CD4-positive, alpha-beta memory T cell (primary cell): ENCODE measurements at regions of chr17 and their contacts with region 1.

Region 1: GRCh38 chr17:16537130-16537458 is 31.9 kb downstream of the ZNF287 start:
- DNase-seq: no peak
- H3K4me3 ChIP-seq: peak overlapping the region in 1 of 2 donors; percentile 90
- H3K4me3 Mint-ChIP-seq: peak overlapping the region; percentile 95 to 99 (median 98)
- H3K27ac ChIP-seq: no peak overlapping the region
- H3K27ac Mint-ChIP-seq: peak overlapping the region; percentile 75 to 99 (median 90)
- H3K4me1 ChIP-seq: peaks cover 7% of the 10 kb centered on the region
- H3K4me1 Mint-ChIP-seq: peaks cover 10 to 24% (median 17%) of the 10 kb centered on the region in 4 donors
- H3K27me3 ChIP-seq: no peaks in the 10 kb centered on the region
- H3K27me3 Mint-ChIP-seq: peaks cover 0 to 1% of the 10 kb centered on the region in 2 donors

Region 2: DNA sequence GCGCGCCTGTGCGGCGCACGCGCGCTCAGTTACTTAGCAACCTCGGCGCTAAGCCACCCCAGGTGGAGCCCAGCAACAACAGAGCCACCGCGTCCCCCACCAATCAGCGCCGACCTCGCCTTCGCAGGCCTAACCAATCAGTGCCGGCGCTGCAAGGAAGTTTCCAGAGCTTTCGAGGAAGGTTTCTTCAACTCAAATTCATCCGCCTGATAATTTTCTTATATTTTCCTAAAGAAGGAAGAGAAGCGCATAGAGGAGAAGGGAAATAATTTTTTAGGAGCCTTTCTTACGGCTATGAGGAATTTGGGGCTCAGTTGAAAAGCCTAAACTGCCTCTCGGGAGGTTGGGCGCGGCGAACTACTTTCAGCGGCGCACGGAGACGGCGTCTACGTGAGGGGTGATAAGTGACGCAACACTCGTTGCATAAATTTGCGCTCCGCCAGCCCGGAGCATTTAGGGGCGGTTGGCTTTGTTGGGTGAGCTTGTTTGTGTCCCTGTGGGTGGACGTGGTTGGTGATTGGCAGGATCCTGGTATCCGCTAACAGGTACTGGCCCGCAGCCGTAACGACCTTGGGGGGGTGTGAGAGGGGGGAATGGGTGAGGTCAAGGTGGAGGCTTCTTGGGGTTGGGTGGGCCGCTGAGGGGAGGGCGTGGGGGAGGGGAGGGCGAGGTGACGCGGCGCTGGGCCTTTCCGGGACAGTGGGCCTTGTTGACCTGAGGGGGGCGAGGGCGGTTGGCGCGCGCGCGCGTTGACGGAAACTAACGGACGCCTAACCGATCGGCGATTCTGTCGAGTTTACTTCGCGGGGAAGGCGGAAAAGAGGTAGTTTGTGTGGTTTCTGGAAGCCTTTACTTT is 156.2 kb before region 1 on chr17 and contains the start of gene UBB:
- CTCF ChIA-PET with region 1: interaction called, 7 read pairs
- POLR2A ChIA-PET with region 1: interaction called, 28 read pairs
- intact Hi-C with region 1: loop called (anchors 5 kb)
- DNase-seq: peak; percentile 93 to 98 (median 97)
- H3K4me3 ChIP-seq: peak within 1 kb of the TSS; percentile 72 to 94
- H3K4me3 Mint-ChIP-seq: peak within 1 kb of the TSS; percentile 86 to 99 (median 94)
- H3K27ac ChIP-seq: peak within 1 kb of the TSS; percentile 91
- H3K27ac Mint-ChIP-seq: peak within 1 kb of the TSS; percentile 94 to 100 (median 99)
- H3K4me1 ChIP-seq: peaks cover 25% of the 10 kb centered on the region
- H3K4me1 Mint-ChIP-seq: peaks cover 28 to 49% (median 39%) of the 10 kb centered on the region in 4 donors
- H3K27me3 ChIP-seq: no peaks in the 10 kb centered on the region
- H3K27me3 Mint-ChIP-seq: peaks cover 0 to 4% of the 10 kb centered on the region in 2 donors
- total RNA-seq, gene UBB: 523 to 560 TPM

Region 3: GRCh38 chr17:16438557-16439302 is 98.4 kb before region 1 on chr17:
- CTCF ChIA-PET with region 1: interaction called, 5 read pairs
- POLR2A ChIA-PET with region 1: interaction called, 35 read pairs
- intact Hi-C with region 1: loop called (anchors 1 kb)
- DNase-seq: peak; percentile 94 to 97 (median 96)
- H3K4me3 ChIP-seq: peak overlapping the region; percentile 78 to 95
- H3K4me3 Mint-ChIP-seq: peak overlapping the region; percentile 98 to 100 (median 99)
- H3K27ac ChIP-seq: peak overlapping the region; percentile 94
- H3K27ac Mint-ChIP-seq: peak overlapping the region; percentile 96 to 100 (median 99)
- H3K4me1 ChIP-seq: peaks cover 45% of the 10 kb centered on the region
- H3K4me1 Mint-ChIP-seq: peaks cover 32 to 57% (median 43%) of the 10 kb centered on the region in 4 donors
- H3K27me3 ChIP-seq: no peaks in the 10 kb centered on the region
- H3K27me3 Mint-ChIP-seq: no peaks in the 10 kb centered on the region

Region 4: GRCh38 chr17:16506188-16506587 is 30.9 kb before region 1 on chr17:
- CTCF ChIA-PET with region 1: no interaction called
- POLR2A ChIA-PET with region 1: no interaction called
- intact Hi-C with region 1: no loop called
- DNase-seq: no peak
- H3K4me3 ChIP-seq: no peak overlapping the region
- H3K4me3 Mint-ChIP-seq: no peak overlapping the region
- H3K27ac ChIP-seq: no peak overlapping the region
- H3K27ac Mint-ChIP-seq: no peak overlapping the region
- H3K4me1 ChIP-seq: no peaks in the 10 kb centered on the region
- H3K4me1 Mint-ChIP-seq: no peaks in the 10 kb centered on the region
- H3K27me3 ChIP-seq: no peaks in the 10 kb centered on the region
- H3K27me3 Mint-ChIP-seq: no peaks in the 10 kb centered on the region

Region 5: GRCh38 chr17:16568541-16569357 is 31.7 kb after region 1 on chr17 and contains the start of gene ZNF287:
- CTCF ChIA-PET with region 1: interaction called, 7 read pairs
- POLR2A ChIA-PET with region 1: interaction called, 18 read pairs
- intact Hi-C with region 1: loop called (anchors 1 kb)
- DNase-seq: peak; percentile 91 to 96 (median 93)
- H3K4me3 ChIP-seq: peak within 1 kb of the TSS; percentile 33 to 87
- H3K4me3 Mint-ChIP-seq: peak within 1 kb of the TSS; percentile 85 to 89 (median 86)
- H3K27ac ChIP-seq: peak within 1 kb of the TSS; percentile 38
- H3K27ac Mint-ChIP-seq: peak within 1 kb of the TSS; percentile 79 to 98 (median 96)
- H3K4me1 ChIP-seq: peaks cover 14% of the 10 kb centered on the region
- H3K4me1 Mint-ChIP-seq: peaks cover 8 to 19% (median 12%) of the 10 kb centered on the region in 4 donors
- H3K27me3 ChIP-seq: no peaks in the 10 kb centered on the region
- H3K27me3 Mint-ChIP-seq: peaks cover 2 to 3% of the 10 kb centered on the region in 2 donors
- total RNA-seq, gene ZNF287: 16.7 to 17.9 TPM

Region 6: GRCh38 chr17:16653209-16654041 is 116.3 kb after region 1 on chr17 and contains the start of gene ZNF624:
- CTCF ChIA-PET with region 1: no interaction called
- POLR2A ChIA-PET with region 1: interaction called, 3 read pairs
- intact Hi-C with region 1: loop called (anchors 1 kb)
- DNase-seq: peak; percentile 81 to 85 (median 83)
- H3K4me3 ChIP-seq: peak within 1 kb of the TSS; percentile 60 to 82
- H3K4me3 Mint-ChIP-seq: peak within 1 kb of the TSS; percentile 73 to 90 (median 86)
- H3K27ac ChIP-seq: peak within 1 kb of the TSS; percentile 69
- H3K27ac Mint-ChIP-seq: peak within 1 kb of the TSS; percentile 3 to 88 (median 79)
- H3K4me1 ChIP-seq: peaks cover 15% of the 10 kb centered on the region
- H3K4me1 Mint-ChIP-seq: peaks cover 17 to 25% (median 21%) of the 10 kb centered on the region in 4 donors
- H3K27me3 ChIP-seq: no peaks in the 10 kb centered on the region
- H3K27me3 Mint-ChIP-seq: peaks cover 2 to 6% of the 10 kb centered on the region in 2 donors
- total RNA-seq, gene ZNF624: 11.5 to 12.0 TPM

Region 7: DNA sequence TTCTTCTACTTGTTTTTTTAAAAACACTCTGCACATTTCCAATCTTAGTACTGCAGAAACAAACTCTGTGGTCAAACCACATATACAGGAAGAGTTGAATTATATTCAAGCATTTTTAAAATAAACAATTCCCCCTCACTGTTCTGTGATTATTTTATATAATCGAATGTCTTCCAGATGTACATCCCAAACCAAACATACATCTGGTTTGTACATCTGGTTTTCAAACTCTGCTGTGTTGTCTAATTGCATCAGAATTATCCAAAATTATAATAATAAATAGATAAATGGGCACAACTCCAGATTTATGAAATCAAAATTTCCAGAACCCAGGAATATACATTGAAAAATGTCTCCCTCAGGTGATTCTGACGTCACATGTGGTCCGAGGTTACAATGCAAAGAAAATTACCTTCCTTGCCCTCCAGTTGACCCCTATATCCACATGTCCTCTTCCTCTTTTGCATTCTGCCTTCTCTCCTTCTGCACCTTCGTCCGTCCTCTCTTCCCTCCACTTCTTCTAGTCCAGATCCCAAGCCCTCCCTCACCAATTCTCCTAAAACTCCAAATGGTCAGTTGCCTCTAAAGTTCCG is 139.7 kb after region 1 on chr17:
- CTCF ChIA-PET with region 1: no interaction called
- POLR2A ChIA-PET with region 1: no interaction called
- intact Hi-C with region 1: no loop called
- DNase-seq: no peak
- H3K4me3 ChIP-seq: no peak overlapping the region
- H3K4me3 Mint-ChIP-seq: no peak overlapping the region
- H3K27ac ChIP-seq: no peak overlapping the region
- H3K27ac Mint-ChIP-seq: no peak overlapping the region
- H3K4me1 ChIP-seq: no peaks in the 10 kb centered on the region
- H3K4me1 Mint-ChIP-seq: no peaks in the 10 kb centered on the region
- H3K27me3 ChIP-seq: no peaks in the 10 kb centered on the region
- H3K27me3 Mint-ChIP-seq: peaks cover 3 to 8% of the 10 kb centered on the region in 2 donors

Region 8: GRCh38 chr17:16987830-16988601 is 450.9 kb after region 1 on chr17:
- CTCF ChIA-PET with region 1: interaction called, 16 read pairs
- POLR2A ChIA-PET with region 1: interaction called, 4 read pairs
- intact Hi-C with region 1: loop called (anchors 1 kb)
- DNase-seq: peak in 4 of 5 donors; percentile 33 to 42 (median 36)
- H3K4me3 ChIP-seq: peak overlapping the region; percentile 11 to 20
- H3K4me3 Mint-ChIP-seq: peak overlapping the region; percentile 56 to 85 (median 82)
- H3K27ac ChIP-seq: peak overlapping the region; percentile 36
- H3K27ac Mint-ChIP-seq: peak overlapping the region; percentile 65 to 97 (median 90)
- H3K4me1 ChIP-seq: peaks cover 48% of the 10 kb centered on the region
- H3K4me1 Mint-ChIP-seq: peaks cover 29 to 43% (median 33%) of the 10 kb centered on the region in 4 donors
- H3K27me3 ChIP-seq: no peaks in the 10 kb centered on the region
- H3K27me3 Mint-ChIP-seq: no peaks in the 10 kb centered on the region

Region 9: DNA sequence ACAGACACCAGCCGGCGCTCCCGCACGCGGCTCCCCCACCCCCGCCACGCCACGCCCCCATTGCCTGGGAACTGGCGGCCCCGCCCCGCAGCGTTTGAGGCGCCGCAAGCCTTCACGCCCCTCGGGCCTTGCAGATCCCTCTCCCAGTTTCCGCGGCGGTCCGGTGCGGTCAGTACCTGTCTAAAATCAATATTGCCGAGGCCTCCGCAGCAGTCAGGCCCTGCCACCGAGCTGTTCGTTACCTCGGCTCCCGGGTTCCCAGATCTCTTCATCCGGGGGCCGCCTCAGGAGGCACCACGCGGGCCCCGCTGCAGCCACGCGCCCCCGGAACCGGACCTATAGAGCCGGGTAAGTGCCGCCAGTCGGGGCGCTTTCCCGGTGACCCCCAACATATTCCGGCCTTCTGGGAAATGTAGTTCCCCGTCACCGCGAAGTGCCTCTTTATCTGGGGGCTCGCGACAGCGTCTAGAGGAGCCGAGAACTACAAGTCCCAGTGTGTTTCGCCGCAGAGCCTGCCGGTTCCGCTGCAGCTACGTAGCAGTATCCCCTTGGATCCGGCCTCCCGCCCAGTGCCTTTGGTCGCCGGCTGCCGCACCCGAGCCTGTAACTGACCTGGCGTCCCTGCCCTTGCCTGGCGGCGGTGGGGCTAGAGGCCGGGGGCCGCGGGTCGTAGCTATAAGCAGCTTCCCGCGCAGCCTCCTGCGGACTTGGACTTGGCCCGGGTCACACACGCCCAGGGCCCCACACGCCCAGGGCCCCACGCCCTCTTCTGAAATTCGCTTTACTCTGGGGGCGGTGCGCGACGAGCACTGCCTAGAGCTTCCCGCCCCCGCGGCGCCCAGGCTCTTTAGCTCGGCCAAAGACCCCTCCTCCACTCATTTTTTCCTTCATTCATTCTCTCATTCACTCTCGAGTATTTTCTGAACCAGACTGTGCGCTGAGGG is 1054.5 kb after region 1 on chr17 and contains the start of gene PEMT:
- CTCF ChIA-PET with region 1: no interaction called
- POLR2A ChIA-PET with region 1: no interaction called
- intact Hi-C with region 1: loop called (anchors 2 kb)
- DNase-seq: peak; percentile 94 to 97 (median 94)
- H3K4me3 ChIP-seq: peak within 1 kb of the TSS; percentile 86 to 99
- H3K4me3 Mint-ChIP-seq: peak within 1 kb of the TSS; percentile 93 to 97 (median 95)
- H3K27ac ChIP-seq: peak within 1 kb of the TSS; percentile 73
- H3K27ac Mint-ChIP-seq: peak within 1 kb of the TSS; percentile 84 to 99 (median 96)
- H3K4me1 ChIP-seq: peaks cover 21% of the 10 kb centered on the region
- H3K4me1 Mint-ChIP-seq: peaks cover 11 to 29% (median 18%) of the 10 kb centered on the region in 4 donors
- H3K27me3 ChIP-seq: no peaks in the 10 kb centered on the region
- H3K27me3 Mint-ChIP-seq: no peaks in the 10 kb centered on the region
- total RNA-seq, gene PEMT: 11.6 to 13.8 TPM